Activated T-helper 2 cell treated with anti-CD3 and anti-CD28 coated beads, Interferon-gamma antibody, Interleukin-2, Interleukin-4, amounts not matched to agents 10 μg/mL and 5 μg/mL and 100 μg/mL, durations not matched to agents 14 hours and 24 hours and 36 hours (primary cell): ENCODE measurements at regions of chr9 and their contacts with region 1.

Region 1: GRCh38 chr9:22147813-22148524 is 138.9 kb upstream of the CDKN2B start:
- DNase-seq: peak; percentile 14
- H3K4me3 Mint-ChIP-seq: no peak overlapping the region
- H3K27ac Mint-ChIP-seq: peak overlapping the region; percentile 4
- H3K4me1 Mint-ChIP-seq: peaks cover 36% of the 10 kb centered on the region
- H3K27me3 Mint-ChIP-seq: peaks cover 26% of the 10 kb centered on the region

Region 2: GRCh38 chr9:22119537-22120158 is 28.3 kb before region 1 on chr9:
- intact Hi-C with region 1: loop called (anchors 2 kb)
- DNase-seq: no peak
- H3K4me3 Mint-ChIP-seq: no peak overlapping the region
- H3K27ac Mint-ChIP-seq: no peak overlapping the region
- H3K4me1 Mint-ChIP-seq: peaks cover 16% of the 10 kb centered on the region
- H3K27me3 Mint-ChIP-seq: peaks cover 68% of the 10 kb centered on the region

Region 3: GRCh38 chr9:22238809-22239684 is 91.1 kb after region 1 on chr9:
- intact Hi-C with region 1: loop called (anchors 1 kb)
- DNase-seq: no peak
- H3K4me3 Mint-ChIP-seq: no peak overlapping the region
- H3K27ac Mint-ChIP-seq: no peak overlapping the region
- H3K4me1 Mint-ChIP-seq: peaks cover 52% of the 10 kb centered on the region
- H3K27me3 Mint-ChIP-seq: peaks cover 41% of the 10 kb centered on the region